GM10248 (cell line): ENCODE measurements at regions of chr19 and their contacts with region 1.

Region 1: DNA sequence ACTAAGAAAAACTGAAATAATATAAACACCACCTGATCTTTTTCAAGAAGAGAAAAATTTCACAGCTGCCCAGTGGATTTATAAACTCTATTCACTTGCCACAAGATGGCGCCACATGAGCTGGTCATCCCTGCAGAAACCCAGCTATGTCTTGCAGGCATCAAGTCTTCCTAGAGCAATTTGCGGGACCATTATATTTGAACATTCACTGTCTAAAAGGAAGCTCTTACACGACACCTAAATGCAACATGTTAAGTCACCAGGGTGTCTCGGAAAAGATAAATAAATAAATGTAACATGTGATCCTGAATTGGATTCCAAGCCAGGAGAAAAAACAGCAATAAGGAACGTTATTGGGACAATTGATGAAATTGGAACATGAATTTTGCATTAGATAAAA is 20.3 kb upstream of the AKT2 start:
- DNase-seq: peak; percentile 87
- CTCF ChIP-seq: peak; percentile 75

Region 2: GRCh38 chr19:40285353-40286234 is 19.8 kb before region 1 on chr19:
- CTCF ChIA-PET with region 1: interaction called, 24 read pairs
- POLR2A ChIA-PET with region 1: no interaction called
- DNase-seq: peak; percentile 98
- CTCF ChIP-seq: no peak

Region 3: DNA sequence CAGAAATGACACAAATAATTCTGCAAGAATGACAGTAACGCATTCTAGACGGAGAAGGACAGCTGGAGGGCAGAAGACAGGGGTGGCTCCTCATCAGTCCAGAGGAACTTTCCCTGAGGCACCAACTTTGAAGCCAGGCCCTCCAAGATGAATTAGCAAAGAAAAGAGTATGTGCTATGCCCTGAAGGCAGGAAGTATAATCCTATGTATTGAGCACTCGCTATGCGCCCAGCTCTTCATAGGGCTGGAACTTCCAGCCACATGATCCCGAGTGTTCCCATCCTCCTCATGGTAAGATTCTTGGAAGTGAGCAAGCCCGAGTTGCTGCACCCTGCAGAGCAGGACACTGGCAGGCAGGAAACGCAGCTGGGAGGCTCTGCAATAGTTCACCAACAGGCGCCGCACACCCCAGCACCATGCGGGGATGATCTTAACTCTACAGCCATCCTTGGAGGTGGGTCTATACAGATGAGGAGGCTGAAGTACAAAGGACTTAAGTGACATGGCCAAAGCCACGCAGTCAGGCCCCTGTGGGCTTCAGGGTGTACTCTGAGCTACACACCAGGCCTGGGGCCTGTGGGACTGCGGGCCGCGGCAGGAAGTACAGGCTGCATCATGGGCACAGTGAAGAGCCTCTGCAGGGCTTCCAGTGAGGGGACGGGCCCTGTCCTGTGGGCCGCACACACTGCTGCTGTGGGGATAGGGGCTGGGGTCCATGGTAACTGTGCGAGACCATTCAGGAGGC is 17.6 kb after region 1 on chr19:
- CTCF ChIA-PET with region 1: interaction called, 14 read pairs
- POLR2A ChIA-PET with region 1: no interaction called
- DNase-seq: no peak
- CTCF ChIP-seq: no peak

Region 4: DNA sequence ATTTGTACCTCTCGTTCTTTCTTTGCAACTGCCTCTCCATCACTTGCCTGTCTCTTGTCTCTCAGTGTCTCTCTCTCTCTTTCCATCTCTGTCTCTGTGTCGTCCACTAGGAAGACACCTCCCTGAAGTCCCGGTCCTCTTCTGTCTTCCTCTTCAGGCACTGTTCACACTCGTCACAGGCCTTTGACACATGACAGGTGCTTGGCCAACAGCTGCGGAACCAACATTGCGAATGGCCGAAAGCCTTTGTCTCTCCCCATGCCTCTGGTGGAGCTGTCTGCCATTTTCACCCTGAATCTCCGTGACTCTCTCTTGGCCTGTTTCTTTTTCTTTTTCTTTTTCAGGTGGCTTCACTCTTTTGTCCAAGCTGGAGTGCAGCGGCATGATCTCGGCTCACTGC is 81.8 kb after region 1 on chr19:
- CTCF ChIA-PET with region 1: no interaction called
- POLR2A ChIA-PET with region 1: no interaction called
- DNase-seq: no peak
- CTCF ChIP-seq: no peak

Region 5: GRCh38 chr19:40425450-40426287 is 120.3 kb after region 1 on chr19 and contains the start of gene SERTAD1:
- CTCF ChIA-PET with region 1: interaction called, 11 read pairs
- POLR2A ChIA-PET with region 1: interaction called, 3 read pairs
- DNase-seq: peak; percentile 99
- CTCF ChIP-seq: peak; percentile 59

Region 6: GRCh38 chr19:40598121-40598917 is 292.9 kb after region 1 on chr19:
- CTCF ChIA-PET with region 1: interaction called, 27 read pairs
- POLR2A ChIA-PET with region 1: no interaction called
- DNase-seq: peak; percentile 86
- CTCF ChIP-seq: peak; percentile 98

Region 7: DNA sequence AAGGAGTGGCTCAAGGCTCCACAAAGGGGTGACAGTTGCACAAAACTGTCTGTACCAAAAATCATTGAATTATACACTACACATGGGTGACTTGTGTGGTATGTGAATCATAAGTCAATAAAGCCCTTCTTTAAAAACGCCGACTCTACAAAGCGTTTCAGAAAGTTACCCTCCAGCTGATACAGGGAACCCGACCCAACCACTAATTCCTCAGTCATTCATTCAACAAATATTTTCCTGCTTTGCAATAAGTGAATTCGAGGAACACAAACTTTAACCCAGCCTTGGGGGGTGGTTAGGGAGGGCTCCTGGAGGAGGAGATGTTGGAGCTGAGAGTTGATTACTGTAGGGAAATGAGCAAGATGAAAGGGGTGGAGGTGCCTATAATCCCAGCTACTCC is 327.8 kb after region 1 on chr19:
- CTCF ChIA-PET with region 1: interaction called, 16 read pairs
- POLR2A ChIA-PET with region 1: no interaction called
- DNase-seq: no peak
- CTCF ChIP-seq: no peak